Tibial artery (tissue), 4 donors: ENCODE measurements at regions of chr3 and their contacts with region 1.

Region 1: DNA sequence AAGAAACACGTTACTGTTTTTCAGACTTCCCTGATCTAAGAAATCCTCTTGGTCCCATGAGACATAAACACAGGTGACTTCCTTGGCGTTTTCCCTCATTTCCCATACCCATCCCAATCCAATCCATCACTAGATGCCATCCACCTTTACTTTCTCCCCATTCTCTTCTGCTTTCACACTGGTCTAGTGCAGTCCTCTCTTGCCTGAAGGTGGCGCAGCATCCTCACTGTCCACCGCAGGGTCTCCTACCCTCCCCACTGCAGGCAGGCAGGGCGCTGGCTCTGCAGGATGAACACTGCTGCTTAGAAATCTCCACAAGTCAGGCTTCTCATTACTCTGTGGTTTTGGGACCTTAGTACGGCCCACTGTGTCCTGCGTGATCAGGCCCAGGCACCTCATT is 58.2 kb downstream of the RAB7A start:
- DNase-seq: no peak
- H3K4me3 ChIP-seq: no peak overlapping the region
- H3K27ac ChIP-seq: peak overlapping the region; percentile 5 to 12
- H3K4me1 ChIP-seq: peaks cover 0 to 98% (median 67%) of the 10 kb centered on the region in 4 donors
- H3K27me3 ChIP-seq: no peaks in the 10 kb centered on the region
- CTCF ChIP-seq: peak in 1 of 2 experiments; percentile 8

Region 2: DNA sequence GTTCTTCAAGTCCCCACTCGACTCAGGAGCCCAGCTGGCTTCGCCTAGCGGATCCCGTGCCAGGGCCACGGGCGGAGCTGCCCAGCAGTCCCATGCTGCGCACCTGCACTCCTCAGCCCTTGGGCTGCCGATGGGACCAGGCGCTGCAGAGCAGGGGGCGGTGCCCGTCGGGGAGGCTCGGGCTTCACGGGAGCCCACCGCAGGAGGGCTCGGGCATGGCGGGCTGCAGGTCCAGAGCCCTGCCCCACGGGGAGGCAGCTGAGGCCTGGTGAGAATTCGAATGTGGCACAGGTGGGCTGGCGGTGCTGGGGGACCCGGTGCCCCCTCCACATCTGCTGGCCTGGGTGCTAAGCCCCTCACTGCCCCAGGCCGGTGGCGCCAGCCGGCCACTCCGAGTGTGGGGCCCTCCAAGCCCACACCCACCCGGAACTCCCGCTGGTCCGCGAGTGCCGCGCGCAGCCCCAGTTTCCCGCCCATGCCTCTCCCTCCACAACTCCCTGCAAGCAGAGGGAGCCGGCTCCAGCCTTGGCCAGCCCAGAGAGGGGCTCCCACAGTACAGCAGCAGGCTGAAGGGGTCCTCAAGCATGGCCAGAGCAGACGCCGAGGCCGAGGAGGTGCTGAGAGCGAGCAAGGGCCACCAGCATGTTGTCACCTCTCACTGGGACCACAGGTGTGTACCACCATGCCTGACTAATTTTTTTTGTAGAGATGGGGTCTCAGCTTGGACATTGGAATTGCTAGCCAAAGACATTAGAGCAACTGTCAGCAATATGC is 41.2 kb before region 1 on chr3:
- intact Hi-C with region 1: loop called (anchors 5 kb)
- DNase-seq: no peak
- H3K4me3 ChIP-seq: no peak overlapping the region
- H3K27ac ChIP-seq: no peak overlapping the region
- H3K4me1 ChIP-seq: peaks cover 0 to 15% (median 3%) of the 10 kb centered on the region in 4 donors
- H3K27me3 ChIP-seq: no peaks in the 10 kb centered on the region
- CTCF ChIP-seq: no peak